Ovary (tissue), 10 donors: ENCODE measurements at regions of chr15 and their contacts with region 1.

Region 1: GRCh38 chr15:38817427-38818156 is 253.0 kb upstream of the RASGRP1 start:
- DNase-seq: peak; percentile 79 to 91 (median 89)
- H3K4me3 ChIP-seq: no peak overlapping the region
- H3K27ac ChIP-seq: no peak overlapping the region
- H3K4me1 ChIP-seq: peaks cover 2% of the 10 kb centered on the region
- H3K27me3 ChIP-seq: no peaks in the 10 kb centered on the region
- CTCF ChIP-seq: peak; percentile 97 to 99 (median 98)
- EP300 ChIP-seq: no peak
- POLR2A ChIP-seq: no peak

Region 2: GRCh38 chr15:38504680-38505467 is 312.7 kb before region 1 on chr15:
- intact Hi-C with region 1: no loop called
- DNase-seq: no peak
- H3K4me3 ChIP-seq: no peak overlapping the region
- H3K27ac ChIP-seq: no peak overlapping the region
- H3K4me1 ChIP-seq: no peaks in the 10 kb centered on the region
- H3K27me3 ChIP-seq: no peaks in the 10 kb centered on the region
- CTCF ChIP-seq: no peak
- EP300 ChIP-seq: no peak
- POLR2A ChIP-seq: no peak

Region 3: DNA sequence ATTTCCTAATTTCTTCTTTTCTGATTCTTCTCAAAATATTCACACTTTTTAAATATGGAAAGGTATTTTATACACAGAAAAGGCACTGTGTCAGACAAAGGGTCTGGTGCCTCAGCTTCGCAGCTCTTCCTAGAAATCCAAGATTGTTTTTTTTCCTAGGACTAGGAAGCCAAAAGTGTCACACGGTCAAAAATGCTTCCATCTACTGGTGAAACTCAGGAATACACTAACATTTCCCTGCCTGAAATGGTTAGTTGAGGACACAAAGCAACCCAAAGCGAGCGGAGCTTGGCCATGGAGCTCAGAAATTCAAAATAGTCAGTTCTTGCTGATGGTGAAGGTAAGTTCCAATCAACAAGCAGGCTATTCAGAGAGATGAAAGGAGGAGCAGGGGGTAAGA is 173.5 kb after region 1 on chr15:
- intact Hi-C with region 1: loop called in 3 of 4 experiments (anchors 5 kb)
- DNase-seq: no peak
- H3K4me3 ChIP-seq: no peak overlapping the region
- H3K27ac ChIP-seq: no peak overlapping the region
- H3K4me1 ChIP-seq: no peaks in the 10 kb centered on the region
- H3K27me3 ChIP-seq: no peaks in the 10 kb centered on the region
- CTCF ChIP-seq: peak in 1 of 3 donors; percentile 37
- EP300 ChIP-seq: no peak
- POLR2A ChIP-seq: no peak

Region 4: DNA sequence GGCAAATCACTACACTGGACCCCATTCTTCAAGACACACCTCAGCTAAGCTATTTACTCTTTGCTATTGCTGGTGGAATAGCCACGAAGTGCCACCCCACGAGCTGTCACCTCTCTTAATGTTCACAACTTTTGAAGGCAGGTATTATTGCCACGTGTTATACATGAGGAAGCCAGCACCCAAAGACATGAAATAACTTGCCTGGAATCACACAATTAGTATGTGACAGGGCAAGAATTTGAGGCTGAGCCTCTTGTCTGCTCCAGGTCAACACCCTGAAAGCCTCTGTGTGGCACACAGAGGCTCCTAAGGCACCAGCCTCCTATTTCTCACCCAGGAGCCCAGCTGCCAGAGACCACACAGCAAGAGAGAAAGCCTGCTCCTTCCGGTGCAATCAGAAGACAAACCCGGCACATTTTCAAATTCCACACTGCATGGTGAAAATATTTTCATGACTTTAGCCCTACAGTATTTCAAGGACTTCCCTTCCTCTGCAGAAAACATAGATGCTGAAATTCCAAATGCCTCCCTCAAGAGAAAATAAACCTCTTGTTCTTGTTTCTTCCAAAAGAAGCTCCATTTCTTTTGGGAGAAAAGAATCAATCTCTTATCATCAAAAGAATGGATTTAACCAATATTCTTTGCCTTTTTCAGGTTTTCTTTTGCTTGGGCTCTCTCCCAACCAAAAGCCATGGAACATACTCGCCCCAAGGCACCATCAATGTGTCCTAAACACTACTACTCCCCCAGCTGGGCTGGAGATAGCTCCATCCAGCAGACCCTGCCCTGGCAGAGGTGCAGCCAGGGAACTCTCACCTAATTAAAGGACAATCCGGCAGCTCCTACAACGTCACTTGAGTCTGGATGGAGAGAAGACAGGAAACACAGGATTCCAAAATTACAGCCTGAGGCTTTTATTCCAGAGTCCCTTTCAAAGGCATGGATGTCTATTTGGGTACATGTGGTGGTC is 678.6 kb after region 1 on chr15:
- intact Hi-C with region 1: loop called in 1 of 4 experiments (anchors 5 kb)
- DNase-seq: peak in 3 of 5 donors; percentile 33 to 49 (median 40)
- H3K4me3 ChIP-seq: no peak overlapping the region
- H3K27ac ChIP-seq: peak overlapping the region in 1 of 2 donors; percentile 32
- H3K4me1 ChIP-seq: peaks cover 19% of the 10 kb centered on the region
- H3K27me3 ChIP-seq: no peaks in the 10 kb centered on the region
- CTCF ChIP-seq: no peak
- EP300 ChIP-seq: no peak
- POLR2A ChIP-seq: no peak